A549 (cell line): ENCODE measurements at regions of chr17 and their contacts with region 1.

Region 1: DNA sequence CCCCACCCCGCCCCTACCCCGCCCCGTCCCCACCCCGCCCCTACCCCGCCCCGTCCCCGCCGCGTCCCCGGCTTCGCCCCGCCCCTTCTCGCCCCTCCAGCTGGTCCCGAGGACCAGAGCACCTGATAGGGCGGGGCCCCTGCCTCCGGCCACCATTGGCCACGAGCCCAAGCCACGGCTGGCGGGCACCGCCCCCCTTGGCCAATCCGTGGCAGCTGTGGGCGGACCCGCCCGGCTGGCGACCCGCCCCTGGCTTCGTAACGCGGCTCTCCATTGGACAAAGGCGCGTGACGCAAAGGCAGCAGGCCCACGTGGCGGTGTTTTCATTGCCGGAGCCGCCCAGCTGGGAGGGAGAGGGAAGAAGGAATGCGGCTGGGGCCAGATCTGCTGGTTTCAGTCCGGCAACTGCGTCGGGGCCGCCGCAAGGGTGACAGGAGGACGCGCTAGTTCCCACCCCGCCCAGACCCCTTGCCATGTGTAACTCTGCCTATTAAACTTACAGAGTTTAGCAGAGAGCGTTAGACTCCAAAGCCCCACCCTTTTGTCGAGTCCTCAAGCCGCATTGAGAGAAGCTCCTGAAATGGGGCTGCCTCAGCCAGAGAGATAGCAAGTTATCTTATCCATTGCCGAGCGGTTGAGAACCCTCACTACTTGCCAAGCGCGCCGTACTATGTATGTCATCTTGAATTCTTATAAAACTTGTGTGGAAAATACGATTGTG is 403 bp upstream of the WIPI1 start:
- DNase-seq: peak; percentile 97 to 98
- ATAC-seq: peak; percentile 87 to 93
- H3K4me3 ChIP-seq: peak overlapping the region; percentile 92
- H3K27ac ChIP-seq: no peak overlapping the region
- H3K4me1 ChIP-seq: peaks cover 17% of the 10 kb centered on the region
- CTCF ChIP-seq: no peak
- EP300 ChIP-seq: no peak
- POLR2A ChIP-seq: no peak
- RAD21 ChIP-seq: no peak

Region 2: GRCh38 chr17:68247445-68248198 is 210.1 kb before region 1 on chr17 and contains the start of gene AMZ2:
- CTCF ChIA-PET with region 1: interaction called, 17 read pairs
- POLR2A ChIA-PET with region 1: interaction called, 20 read pairs
- DNase-seq: peak; percentile 85 to 96
- ATAC-seq: peak; percentile 95 to 98
- H3K4me3 ChIP-seq: peak within 1 kb of the TSS; percentile 67
- H3K27ac ChIP-seq: peak within 1 kb of the TSS; percentile 87 to 94
- H3K4me1 ChIP-seq: peaks cover 9% of the 10 kb centered on the region; the same call in 2 of the 3 replicates
- CTCF ChIP-seq: no peak
- EP300 ChIP-seq: no peak
- POLR2A ChIP-seq: peak; percentile 87
- RAD21 ChIP-seq: no peak
- polyA plus RNA-seq, gene AMZ2: 186 and 201 TPM in 2 replicates

Region 3: DNA sequence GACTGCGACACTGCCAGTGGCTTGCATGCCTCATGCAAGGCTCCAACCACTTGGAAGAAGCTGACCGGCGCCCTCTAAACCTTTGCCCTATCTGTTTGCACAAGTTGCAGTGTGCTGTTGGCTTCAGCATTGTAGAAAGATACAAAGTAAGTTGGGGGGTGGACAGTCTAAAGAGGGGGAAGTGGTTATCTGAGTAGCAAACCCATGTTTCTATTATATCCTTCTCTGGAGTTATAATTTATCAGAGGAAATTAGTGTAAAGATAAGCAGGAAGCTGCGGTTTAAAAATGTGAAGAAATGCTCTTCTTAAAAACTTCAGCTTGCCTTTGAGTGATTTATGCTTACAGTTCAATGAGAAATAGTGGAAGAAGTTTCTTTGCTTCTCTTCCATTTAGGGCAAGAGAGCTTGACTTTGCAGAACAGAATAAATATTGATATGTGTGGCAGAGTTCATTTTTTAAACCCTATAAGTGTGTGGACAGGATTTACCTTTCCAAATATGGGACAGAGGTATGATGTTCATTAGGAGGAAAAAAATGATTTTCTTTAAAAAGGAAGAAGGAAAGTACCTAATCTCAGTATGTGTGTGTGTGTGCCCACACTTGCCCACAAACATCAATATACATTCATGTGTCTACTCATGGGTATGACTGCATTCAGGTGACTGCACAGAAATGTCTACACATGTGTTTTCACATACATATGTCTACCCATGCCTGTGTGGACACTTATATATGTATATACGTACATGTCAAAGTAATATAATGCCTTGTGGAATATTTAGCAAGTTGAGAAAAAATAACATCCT is 201.8 kb before region 1 on chr17:
- CTCF ChIA-PET with region 1: interaction called, 39 read pairs
- POLR2A ChIA-PET with region 1: no interaction called
- DNase-seq: no peak
- ATAC-seq: no peak
- H3K4me3 ChIP-seq: no peak overlapping the region
- H3K27ac ChIP-seq: no peak overlapping the region
- H3K4me1 ChIP-seq: no peaks in the 10 kb centered on the region
- CTCF ChIP-seq: no peak
- EP300 ChIP-seq: no peak
- POLR2A ChIP-seq: no peak
- RAD21 ChIP-seq: no peak